B cell (primary cell): ENCODE measurements at regions of chr9 and their contacts with region 1.

Region 1: GRCh38 chr9:137034863-137035761 is 3.2 kb upstream of the FUT7 start:
- DNase-seq: peak; percentile 91
- ATAC-seq: peak; percentile 64
- H3K4me3 ChIP-seq: peak overlapping the region in 4 of 5 experiments; percentile 8 to 37 (median 22)
- H3K4me3 Mint-ChIP-seq: peak overlapping the region; percentile 79
- H3K27ac ChIP-seq: peak overlapping the region; percentile 36 to 47
- H3K27ac Mint-ChIP-seq: peak overlapping the region; percentile 86
- H3K4me1 ChIP-seq: peaks cover 49 to 53% of the 10 kb centered on the region in 2 donors
- H3K4me1 Mint-ChIP-seq: peaks cover 45% of the 10 kb centered on the region
- H3K27me3 ChIP-seq: peaks cover 0 to 6% (median 0%) of the 10 kb centered on the region in 4 experiments
- H3K27me3 Mint-ChIP-seq: no peaks in the 10 kb centered on the region
- CTCF ChIP-seq: peak; percentile 90

Region 2: DNA sequence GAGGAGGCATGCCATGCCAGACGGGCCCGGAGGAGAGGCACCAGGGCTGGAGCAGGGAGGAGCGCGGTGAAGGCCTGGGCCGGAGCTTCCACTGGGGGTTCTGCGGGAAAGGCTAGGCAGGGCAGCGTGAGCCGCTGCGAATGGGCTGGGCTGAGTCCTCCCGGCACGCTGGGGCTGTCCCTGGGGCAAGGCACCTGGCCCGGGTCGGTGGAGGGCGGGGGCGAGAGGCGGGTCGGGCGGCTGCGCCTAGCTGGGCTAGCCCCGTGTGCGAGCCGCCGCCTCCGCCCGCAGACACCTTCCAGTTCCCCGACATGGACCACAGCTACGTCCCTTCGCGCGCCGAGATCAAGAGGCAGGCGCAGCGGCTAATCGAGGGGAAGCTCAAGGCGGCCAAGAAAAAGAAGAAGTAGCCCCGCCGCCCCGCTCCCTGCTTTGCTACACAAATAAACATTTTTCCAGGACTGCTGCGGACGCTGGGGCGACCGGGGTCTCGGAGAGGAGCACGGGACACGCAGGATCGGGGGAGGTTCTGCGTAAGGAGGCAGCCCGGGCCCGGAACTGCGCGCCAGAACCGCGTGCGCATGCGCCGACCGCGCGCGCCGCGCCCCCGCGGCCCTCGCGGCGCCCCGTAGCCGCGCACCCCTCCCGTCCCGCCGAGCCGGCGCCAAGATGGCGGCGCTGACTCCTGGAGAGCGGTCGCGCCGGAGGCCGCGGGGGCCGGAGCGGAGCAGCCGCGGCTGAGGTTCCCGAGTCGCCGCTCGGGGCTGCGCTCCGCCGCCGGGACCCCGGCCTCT is 227.6 kb before region 1 on chr9 and contains the start of gene RABL6:
- CTCF ChIA-PET with region 1: interaction called, 12 read pairs
- POLR2A ChIA-PET with region 1: interaction called, 3 read pairs
- intact Hi-C with region 1: no loop called
- DNase-seq: peak; percentile 93
- ATAC-seq: peak; percentile 86
- H3K4me3 ChIP-seq: peak within 1 kb of the TSS; percentile 42 to 97 (median 76)
- H3K4me3 Mint-ChIP-seq: peak within 1 kb of the TSS; percentile 89
- H3K27ac ChIP-seq: peak within 1 kb of the TSS; percentile 84
- H3K27ac Mint-ChIP-seq: peak within 1 kb of the TSS; percentile 95
- H3K4me1 ChIP-seq: peaks cover 19 to 21% of the 10 kb centered on the region in 2 donors
- H3K4me1 Mint-ChIP-seq: peaks cover 31% of the 10 kb centered on the region
- H3K27me3 ChIP-seq: no peaks in the 10 kb centered on the region
- H3K27me3 Mint-ChIP-seq: no peaks in the 10 kb centered on the region
- CTCF ChIP-seq: no peak
- total RNA-seq, gene RABL6: 70.5 and 72.3 TPM in 2 replicates

Region 3: DNA sequence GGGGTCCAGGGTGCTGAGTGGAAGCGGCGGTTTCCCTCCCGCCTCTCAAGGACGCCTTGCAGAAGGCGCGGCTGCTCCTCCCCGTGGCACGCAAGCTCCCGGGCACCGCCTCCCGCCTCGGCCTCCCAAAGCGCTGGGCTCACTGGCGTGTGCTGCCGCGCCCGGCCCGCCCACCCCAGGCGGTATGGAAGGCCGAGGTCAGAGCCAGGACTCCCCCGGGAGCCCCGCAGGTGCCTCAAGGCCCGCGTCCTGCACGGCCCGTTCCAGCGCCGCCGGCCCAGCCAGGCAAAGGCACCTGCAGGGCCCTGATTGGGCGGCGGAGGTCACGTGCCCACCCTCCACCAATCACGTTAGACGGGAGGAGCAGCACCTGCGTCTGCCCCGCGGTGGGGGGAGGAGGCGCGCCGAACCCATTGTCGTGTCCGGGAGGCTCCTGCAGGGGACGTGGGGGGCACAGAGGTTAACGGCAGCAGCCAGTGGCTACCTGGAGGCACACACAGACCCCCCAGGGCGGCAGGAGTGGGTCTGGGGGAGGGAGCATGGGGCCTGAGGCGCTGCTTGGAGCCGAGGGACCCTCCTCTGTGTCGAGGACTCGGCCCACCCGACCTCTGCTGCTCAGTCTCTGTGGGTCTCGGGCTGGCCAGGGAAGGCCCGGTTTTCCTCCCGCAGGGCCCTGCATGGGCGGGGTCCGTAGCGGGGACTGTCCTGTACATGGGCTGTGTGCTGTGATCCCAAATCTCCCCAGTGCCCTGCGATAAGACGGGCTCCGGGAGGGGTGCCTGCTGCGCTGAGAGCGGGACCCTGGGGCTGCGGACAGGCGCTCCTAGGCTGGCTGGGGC is 85.1 kb before region 1 on chr9:
- CTCF ChIA-PET with region 1: interaction called, 39 read pairs
- POLR2A ChIA-PET with region 1: interaction called, 6 read pairs
- intact Hi-C with region 1: no loop called
- DNase-seq: peak; percentile 97
- ATAC-seq: peak; percentile 95
- H3K4me3 ChIP-seq: peak overlapping the region; percentile 44 to 65 (median 58)
- H3K4me3 Mint-ChIP-seq: peak overlapping the region; percentile 88
- H3K27ac ChIP-seq: peak overlapping the region; percentile 41 to 72
- H3K27ac Mint-ChIP-seq: peak overlapping the region; percentile 92
- H3K4me1 ChIP-seq: peaks cover 10 to 15% of the 10 kb centered on the region in 2 donors
- H3K4me1 Mint-ChIP-seq: peaks cover 8% of the 10 kb centered on the region
- H3K27me3 ChIP-seq: no peaks in the 10 kb centered on the region
- H3K27me3 Mint-ChIP-seq: no peaks in the 10 kb centered on the region
- CTCF ChIP-seq: peak; percentile 36

Region 4: DNA sequence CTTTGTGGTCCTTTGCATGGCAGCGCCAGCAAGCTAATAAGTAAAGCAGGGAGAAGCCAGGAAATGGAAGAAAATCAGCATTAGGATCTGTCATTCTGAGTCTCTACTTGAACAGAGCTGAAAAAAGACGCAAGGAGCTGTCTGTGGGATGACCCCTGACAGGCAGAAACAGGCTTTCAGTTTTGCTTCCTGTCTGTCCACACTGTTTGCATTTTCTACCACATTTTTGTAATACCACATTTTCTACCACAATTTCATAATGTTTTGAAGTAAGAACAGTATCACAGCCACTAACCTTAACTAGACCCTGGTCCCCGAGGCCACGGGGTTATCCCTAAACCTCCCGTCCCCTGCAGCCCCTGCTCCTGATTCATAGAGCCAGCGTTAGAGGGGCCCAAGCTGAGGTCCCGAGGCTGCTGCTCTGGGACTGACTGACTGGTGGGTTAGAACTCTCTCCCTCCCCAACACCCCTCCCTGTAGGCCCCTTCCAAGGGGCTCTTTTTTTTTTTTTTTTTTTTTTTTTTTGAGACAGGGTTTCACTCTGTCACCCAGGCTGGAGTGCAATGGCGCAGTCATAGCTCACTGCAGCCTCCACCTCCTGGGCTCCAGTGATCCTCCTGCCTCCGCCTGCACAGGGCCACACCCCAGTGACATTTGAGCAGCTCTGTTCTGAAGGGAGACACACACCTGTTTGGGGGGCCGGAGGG is 34.8 kb before region 1 on chr9:
- CTCF ChIA-PET with region 1: interaction called, 27 read pairs
- POLR2A ChIA-PET with region 1: interaction called, 3 read pairs
- intact Hi-C with region 1: loop called (anchors 1 kb)
- DNase-seq: peak; percentile 68
- ATAC-seq: peak; percentile 54
- H3K4me3 ChIP-seq: peak overlapping the region in 2 of 5 experiments; percentile 41 to 50
- H3K4me3 Mint-ChIP-seq: peak overlapping the region; percentile 81
- H3K27ac ChIP-seq: peak overlapping the region; percentile 4 to 74
- H3K27ac Mint-ChIP-seq: peak overlapping the region; percentile 87
- H3K4me1 ChIP-seq: peaks cover 46 to 58% of the 10 kb centered on the region in 2 donors
- H3K4me1 Mint-ChIP-seq: peaks cover 44% of the 10 kb centered on the region
- H3K27me3 ChIP-seq: peaks cover 0 to 4% (median 0%) of the 10 kb centered on the region in 4 experiments
- H3K27me3 Mint-ChIP-seq: peaks cover 3% of the 10 kb centered on the region
- CTCF ChIP-seq: no peak

Region 5: GRCh38 chr9:137046098-137046787 is 11.1 kb after region 1 on chr9 and contains the start of gene NPDC1:
- CTCF ChIA-PET with region 1: interaction called, 30 read pairs
- POLR2A ChIA-PET with region 1: interaction called, 3 read pairs
- intact Hi-C with region 1: no loop called
- DNase-seq: peak; percentile 89
- ATAC-seq: peak; percentile 96
- H3K4me3 ChIP-seq: peak within 1 kb of the TSS in 3 of 5 experiments; percentile 18 to 46 (median 23)
- H3K4me3 Mint-ChIP-seq: peak within 1 kb of the TSS; percentile 47
- H3K27ac ChIP-seq: no peak within 1 kb of the TSS
- H3K27ac Mint-ChIP-seq: peak within 1 kb of the TSS; percentile 15
- H3K4me1 ChIP-seq: peaks cover 24 to 42% of the 10 kb centered on the region in 2 donors
- H3K4me1 Mint-ChIP-seq: peaks cover 10% of the 10 kb centered on the region
- H3K27me3 ChIP-seq: peaks cover 0 to 86% (median 53%) of the 10 kb centered on the region in 4 experiments
- H3K27me3 Mint-ChIP-seq: peaks cover 17% of the 10 kb centered on the region
- CTCF ChIP-seq: peak; percentile 87
- total RNA-seq, gene NPDC1: 0.17 and 0.39 TPM in 2 replicates

Region 6: DNA sequence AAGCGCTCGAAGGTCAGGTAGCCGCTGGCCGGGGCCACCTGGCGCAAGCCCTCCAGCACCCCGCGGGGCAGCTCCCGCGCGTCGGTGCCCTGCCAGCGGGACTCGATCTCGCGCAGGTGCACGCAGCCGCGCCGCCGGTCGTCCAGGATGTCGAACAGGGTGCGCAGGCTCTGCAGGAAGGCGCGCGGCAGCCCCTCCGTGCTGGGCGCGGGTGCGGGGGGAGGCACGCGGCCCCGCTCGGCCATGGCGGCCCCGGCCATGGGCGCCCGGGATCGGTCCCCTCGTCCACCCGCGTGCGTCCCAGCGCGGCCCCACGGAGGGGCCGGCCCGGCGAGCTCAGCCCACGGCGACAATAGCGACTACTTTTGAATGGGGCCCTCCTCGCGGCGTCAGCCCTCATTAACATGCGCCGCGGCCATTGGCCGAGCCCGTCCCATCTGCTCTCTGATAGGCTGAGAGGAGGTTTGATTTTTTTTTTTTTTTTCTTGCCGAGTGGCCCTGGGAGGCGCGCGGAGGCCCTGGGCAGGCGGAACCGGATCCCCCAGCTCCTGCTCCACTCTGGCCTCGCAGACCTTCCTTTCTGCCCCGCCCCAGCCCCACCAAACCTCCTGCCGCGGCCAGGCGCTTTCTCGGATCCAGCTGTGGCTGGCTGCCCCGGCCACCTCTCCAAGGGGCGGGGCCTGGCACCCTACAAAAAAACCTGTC is 35.2 kb after region 1 on chr9 and contains the start of gene SAPCD2:
- CTCF ChIA-PET with region 1: interaction called, 49 read pairs
- POLR2A ChIA-PET with region 1: interaction called, 4 read pairs
- intact Hi-C with region 1: loop called (anchors 5 kb)
- DNase-seq: peak; percentile 93
- ATAC-seq: peak; percentile 85
- H3K4me3 ChIP-seq: peak within 1 kb of the TSS in 4 of 5 experiments; percentile 36 to 47 (median 44)
- H3K4me3 Mint-ChIP-seq: peak within 1 kb of the TSS; percentile 82
- H3K27ac ChIP-seq: no peak within 1 kb of the TSS
- H3K27ac Mint-ChIP-seq: peak within 1 kb of the TSS; percentile 81
- H3K4me1 ChIP-seq: peaks cover 19 to 36% of the 10 kb centered on the region in 2 donors
- H3K4me1 Mint-ChIP-seq: peaks cover 26% of the 10 kb centered on the region
- H3K27me3 ChIP-seq: peaks cover 0 to 15% (median 1%) of the 10 kb centered on the region in 4 experiments
- H3K27me3 Mint-ChIP-seq: peaks cover 3% of the 10 kb centered on the region
- CTCF ChIP-seq: no peak
- total RNA-seq, gene SAPCD2: 0.39 and 0.73 TPM in 2 replicates

Region 7: GRCh38 chr9:137305060-137305797 is 270.1 kb after region 1 on chr9:
- CTCF ChIA-PET with region 1: no interaction called
- POLR2A ChIA-PET with region 1: no interaction called
- intact Hi-C with region 1: no loop called
- DNase-seq: peak; percentile 67
- ATAC-seq: no peak
- H3K4me3 ChIP-seq: no peak overlapping the region
- H3K4me3 Mint-ChIP-seq: peak overlapping the region; percentile 19
- H3K27ac ChIP-seq: no peak overlapping the region
- H3K27ac Mint-ChIP-seq: no peak overlapping the region
- H3K4me1 ChIP-seq: peaks cover 38 to 51% of the 10 kb centered on the region in 2 donors
- H3K4me1 Mint-ChIP-seq: peaks cover 18% of the 10 kb centered on the region
- H3K27me3 ChIP-seq: peaks cover 0 to 44% (median 14%) of the 10 kb centered on the region in 4 experiments
- H3K27me3 Mint-ChIP-seq: no peaks in the 10 kb centered on the region
- CTCF ChIP-seq: no peak